Common myeloid progenitor, CD34-positive (primary cell): ENCODE measurements at regions of chr2 and their contacts with region 1.

Region 1: GRCh38 chr2:65215946-65216345 is 11.7 kb upstream of the ACTR2 start:
- DNase-seq: peak in 2 of 3 donors; percentile 36 to 51
- H3K4me3 ChIP-seq: no peak overlapping the region
- H3K27ac ChIP-seq: no peak overlapping the region
- H3K4me1 ChIP-seq: peaks cover 0 to 9% (median 5%) of the 10 kb centered on the region in 4 experiments
- H3K27me3 ChIP-seq: no peaks in the 10 kb centered on the region

Region 2: GRCh38 chr2:64982311-64982857 is 233.6 kb before region 1 on chr2:
- CTCF ChIA-PET with region 1: no interaction called
- POLR2A ChIA-PET with region 1: no interaction called
- DNase-seq: no peak
- H3K4me3 ChIP-seq: no peak overlapping the region
- H3K27ac ChIP-seq: no peak overlapping the region
- H3K4me1 ChIP-seq: peaks cover 7 to 43% (median 20%) of the 10 kb centered on the region in 4 experiments
- H3K27me3 ChIP-seq: no peaks in the 10 kb centered on the region

Region 3: GRCh38 chr2:65227425-65228262 is 11.7 kb after region 1 on chr2 and contains the start of gene ACTR2:
- CTCF ChIA-PET with region 1: interaction called, 10 read pairs
- POLR2A ChIA-PET with region 1: interaction called, 3 read pairs
- DNase-seq: peak; percentile 98 to 99 (median 99)
- H3K4me3 ChIP-seq: peak within 1 kb of the TSS; percentile 76 to 100 (median 94)
- H3K27ac ChIP-seq: peak within 1 kb of the TSS; percentile 96 to 99
- H3K4me1 ChIP-seq: peaks cover 4 to 46% (median 34%) of the 10 kb centered on the region in 4 experiments
- H3K27me3 ChIP-seq: no peaks in the 10 kb centered on the region